ENCODE measurements at regions of chr2 and their contacts with region 1.

Region 1: GRCh38 chr2:9018534-9018933 is 15.1 kb upstream of the MBOAT2 start:
- DNase-seq: no peak
- H3K4me3 ChIP-seq: no peak overlapping the region
- H3K27ac ChIP-seq: no peak overlapping the region
- H3K4me1 ChIP-seq: no peaks in the 10 kb centered on the region
- H3K27me3 ChIP-seq: no peaks in the 10 kb centered on the region
- CTCF ChIP-seq: no peak
- POLR2A ChIP-seq: no peak

Region 2: DNA sequence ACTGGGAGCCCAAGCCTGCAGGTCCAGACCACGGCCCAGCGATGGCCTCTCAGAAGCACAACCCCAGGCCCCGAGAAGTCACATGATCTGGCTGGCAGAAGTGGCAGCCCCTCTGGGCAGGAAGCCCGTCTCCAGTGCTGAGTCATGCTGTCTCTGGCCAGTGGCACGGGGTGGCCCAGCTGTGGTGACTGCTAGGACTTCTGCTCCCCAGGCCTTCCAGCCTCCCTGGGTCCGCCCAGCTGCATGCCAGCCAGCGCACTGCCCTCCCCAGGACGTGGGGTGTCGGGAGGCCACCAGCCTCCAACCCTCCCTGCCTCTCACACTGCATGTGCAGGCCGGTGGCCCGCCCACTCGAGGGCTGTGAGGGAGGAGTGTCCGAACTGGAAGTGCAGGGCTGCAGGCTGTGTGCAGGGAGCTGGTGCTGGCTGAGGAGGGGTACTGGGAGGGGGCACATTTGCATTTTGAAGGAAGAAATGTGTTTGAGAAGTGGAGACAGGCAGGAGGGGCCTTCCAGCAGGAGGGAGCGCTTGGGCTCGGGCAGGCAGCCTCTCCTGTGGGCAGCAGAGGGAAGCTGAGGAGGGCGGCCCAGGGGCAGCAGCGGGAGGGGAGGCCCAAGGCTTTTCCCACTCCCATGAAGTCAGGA is 1267.1 kb after region 1 on chr2:
- intact Hi-C with region 1: loop called (anchors 5 kb)
- DNase-seq: peak; percentile 56 to 75
- H3K4me3 ChIP-seq: no peak overlapping the region
- H3K27ac ChIP-seq: peak overlapping the region; percentile 20 to 26
- H3K4me1 ChIP-seq: peaks cover 7 to 10% of the 10 kb centered on the region in 2 donors
- H3K27me3 ChIP-seq: no peaks in the 10 kb centered on the region
- CTCF ChIP-seq: no peak
- POLR2A ChIP-seq: no peak